ENCODE measurements at regions of chr19 and their contacts with region 1.

Region 1: DNA sequence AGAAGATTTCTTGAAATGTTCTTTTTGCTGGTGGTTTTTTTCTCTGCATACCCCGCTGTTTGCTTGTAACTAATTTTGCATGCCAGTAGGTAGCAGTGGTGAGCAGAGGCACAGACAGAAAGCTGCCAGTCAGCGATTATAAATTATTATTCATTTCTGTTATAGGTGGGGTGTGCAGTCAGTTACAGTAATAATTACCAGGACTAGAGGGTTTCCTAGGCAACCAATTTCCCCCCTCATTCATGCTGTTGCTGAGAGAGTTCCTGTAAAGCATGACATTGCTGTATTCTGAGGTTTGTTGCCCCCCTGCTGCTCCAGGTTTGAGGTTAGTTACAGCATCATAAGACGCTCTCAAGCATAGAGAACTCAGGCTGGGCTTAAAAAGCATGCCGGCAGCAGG is 104.5 kb downstream of the URI1 start:
- DNase-seq: no peak
- ATAC-seq: peak; percentile 82
- H3K4me3 ChIP-seq: no peak overlapping the region
- H3K27ac ChIP-seq: no peak overlapping the region
- H3K4me1 ChIP-seq: no peaks in the 10 kb centered on the region
- H3K27me3 ChIP-seq: no peaks in the 10 kb centered on the region
- CTCF ChIP-seq: peak; percentile 6 to 72 (median 70); a peak in 4 of 6 replicates
- POLR2A ChIP-seq: no peak
- RAD21 ChIP-seq: peak; percentile 41; the same call in 1 of the 2 replicates

Region 2: GRCh38 chr19:30649934-30650614 is 603.6 kb after region 1 on chr19:
- CTCF ChIA-PET with region 1: no interaction called
- POLR2A ChIA-PET with region 1: no interaction called
- RAD21 ChIA-PET with region 1: no interaction called
- intact Hi-C with region 1: loop called (anchors 2 kb)
- DNase-seq: peak; percentile 46
- ATAC-seq: peak; percentile 75
- H3K4me3 ChIP-seq: no peak overlapping the region
- H3K27ac ChIP-seq: no peak overlapping the region
- H3K4me1 ChIP-seq: no peaks in the 10 kb centered on the region
- H3K27me3 ChIP-seq: peaks cover 12% of the 10 kb centered on the region; the same call in 1 of the 2 replicates
- CTCF ChIP-seq: peak; percentile 46 to 86 (median 76); a peak in 5 of 6 replicates
- POLR2A ChIP-seq: no peak
- RAD21 ChIP-seq: peak; percentile 67